MCF 10A (cell line): ENCODE measurements at regions of chr4 and their contacts with region 1.

Region 1: GRCh38 chr4:158302076-158302866 is 92.0 kb downstream of the TMEM144 start:
- DNase-seq: peak; percentile 69
- H3K4me3 Mint-ChIP-seq: no peak overlapping the region
- H3K27ac Mint-ChIP-seq: peak overlapping the region; percentile 84
- H3K4me1 Mint-ChIP-seq: peaks cover 42% of the 10 kb centered on the region
- H3K27me3 Mint-ChIP-seq: no peaks in the 10 kb centered on the region
- CTCF ChIP-seq: no peak

Region 2: GRCh38 chr4:158371158-158371557 is 68.9 kb after region 1 on chr4:
- CTCF ChIA-PET with region 1: no interaction called
- POLR2A ChIA-PET with region 1: interaction called, 12 read pairs
- intact Hi-C with region 1: no loop called
- DNase-seq: peak; percentile 70
- H3K4me3 Mint-ChIP-seq: peak overlapping the region; percentile 56
- H3K27ac Mint-ChIP-seq: peak overlapping the region; percentile 95
- H3K4me1 Mint-ChIP-seq: peaks cover 39% of the 10 kb centered on the region
- H3K27me3 Mint-ChIP-seq: no peaks in the 10 kb centered on the region
- CTCF ChIP-seq: no peak

Region 3: DNA sequence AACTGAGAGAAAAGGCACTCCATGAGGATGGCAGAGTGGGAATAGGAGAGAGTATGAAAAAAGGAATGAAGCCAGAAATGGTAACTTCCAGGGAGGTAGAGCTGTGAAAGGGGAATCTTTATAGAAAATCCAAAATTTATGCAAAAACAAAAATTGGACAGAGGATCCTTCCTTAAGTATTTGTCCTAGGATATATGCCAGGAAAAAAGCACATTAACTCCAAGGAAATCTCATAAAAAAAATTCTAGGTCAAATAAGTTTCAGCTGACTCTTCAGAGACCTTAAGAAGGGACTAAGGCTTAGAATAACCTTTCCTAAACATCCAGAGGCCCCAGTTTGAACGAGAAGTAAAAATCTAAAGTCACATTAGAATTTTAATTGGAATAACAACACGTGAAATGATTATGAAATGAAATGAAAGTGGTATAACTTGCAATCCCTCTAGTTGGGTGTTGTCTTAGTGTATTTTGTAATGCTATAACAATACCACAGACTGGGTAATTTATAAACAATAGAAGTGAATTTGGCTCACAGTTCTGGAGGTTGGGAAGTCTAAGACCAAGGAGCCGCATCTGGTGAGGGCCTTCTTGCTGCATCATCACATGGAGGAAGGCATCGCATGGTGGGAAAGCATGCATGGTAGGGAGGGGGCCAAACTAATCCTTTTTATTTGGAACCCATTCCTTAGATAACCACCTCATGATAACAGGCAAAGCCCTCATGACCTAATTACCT is 74.0 kb after region 1 on chr4:
- CTCF ChIA-PET with region 1: no interaction called
- POLR2A ChIA-PET with region 1: interaction called, 12 read pairs
- intact Hi-C with region 1: no loop called
- DNase-seq: peak; percentile 66
- H3K4me3 Mint-ChIP-seq: no peak overlapping the region
- H3K27ac Mint-ChIP-seq: peak overlapping the region; percentile 55
- H3K4me1 Mint-ChIP-seq: peaks cover 32% of the 10 kb centered on the region
- H3K27me3 Mint-ChIP-seq: no peaks in the 10 kb centered on the region
- CTCF ChIP-seq: no peak